ENCODE measurements at regions of chr9 and their contacts with region 1.

Region 1: DNA sequence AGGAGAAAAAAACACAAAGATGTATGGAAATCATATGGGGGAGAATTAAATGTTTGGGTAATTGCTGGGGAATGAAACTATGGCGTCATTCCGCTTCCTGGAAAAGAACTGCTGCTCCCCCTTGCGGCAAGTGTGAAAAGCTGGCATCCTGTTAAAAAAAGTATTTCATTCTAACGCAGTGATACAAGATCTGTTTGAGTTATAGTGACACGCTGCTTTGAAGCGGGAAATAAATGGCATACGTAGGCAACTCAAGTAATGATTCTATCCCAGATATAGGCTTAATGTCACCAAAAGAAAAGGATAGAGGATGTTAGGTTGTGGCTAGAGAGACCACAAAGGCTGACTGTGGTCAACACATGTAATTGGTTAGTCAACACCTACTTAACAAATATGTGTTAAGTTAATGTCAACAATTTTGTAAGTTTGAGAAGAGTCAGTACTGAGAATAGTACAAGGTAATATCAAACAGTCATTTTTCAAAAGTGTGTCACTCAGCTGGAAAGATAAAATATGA is 70.2 kb upstream of the ALDH1A1 start:
- DNase-seq: peak; percentile 32 to 49 (median 35)
- H3K4me3 ChIP-seq: no peak overlapping the region
- H3K4me3 Mint-ChIP-seq: peak overlapping the region in 1 of 8 donors; percentile 12
- H3K27ac ChIP-seq: no peak overlapping the region
- H3K27ac Mint-ChIP-seq: no peak overlapping the region
- H3K4me1 ChIP-seq: peaks cover 4% of the 10 kb centered on the region
- H3K4me1 Mint-ChIP-seq: peaks cover 0 to 10% (median 6%) of the 10 kb centered on the region in 4 donors
- H3K27me3 ChIP-seq: no peaks in the 10 kb centered on the region
- H3K27me3 Mint-ChIP-seq: peaks cover 6 to 11% of the 10 kb centered on the region in 2 donors

Region 2: GRCh38 chr9:71741711-71742648 is 1281.1 kb before region 1 on chr9:
- CTCF ChIA-PET with region 1: no interaction called
- POLR2A ChIA-PET with region 1: no interaction called
- intact Hi-C with region 1: no loop called
- DNase-seq: no peak
- H3K4me3 ChIP-seq: no peak overlapping the region
- H3K4me3 Mint-ChIP-seq: no peak overlapping the region
- H3K27ac ChIP-seq: no peak overlapping the region
- H3K27ac Mint-ChIP-seq: peak overlapping the region in 4 of 7 donors; percentile 6 to 74 (median 28)
- H3K4me1 ChIP-seq: no peaks in the 10 kb centered on the region
- H3K4me1 Mint-ChIP-seq: peaks cover 0 to 17% (median 9%) of the 10 kb centered on the region in 4 donors
- H3K27me3 ChIP-seq: no peaks in the 10 kb centered on the region
- H3K27me3 Mint-ChIP-seq: no peaks in the 10 kb centered on the region

Region 3: DNA sequence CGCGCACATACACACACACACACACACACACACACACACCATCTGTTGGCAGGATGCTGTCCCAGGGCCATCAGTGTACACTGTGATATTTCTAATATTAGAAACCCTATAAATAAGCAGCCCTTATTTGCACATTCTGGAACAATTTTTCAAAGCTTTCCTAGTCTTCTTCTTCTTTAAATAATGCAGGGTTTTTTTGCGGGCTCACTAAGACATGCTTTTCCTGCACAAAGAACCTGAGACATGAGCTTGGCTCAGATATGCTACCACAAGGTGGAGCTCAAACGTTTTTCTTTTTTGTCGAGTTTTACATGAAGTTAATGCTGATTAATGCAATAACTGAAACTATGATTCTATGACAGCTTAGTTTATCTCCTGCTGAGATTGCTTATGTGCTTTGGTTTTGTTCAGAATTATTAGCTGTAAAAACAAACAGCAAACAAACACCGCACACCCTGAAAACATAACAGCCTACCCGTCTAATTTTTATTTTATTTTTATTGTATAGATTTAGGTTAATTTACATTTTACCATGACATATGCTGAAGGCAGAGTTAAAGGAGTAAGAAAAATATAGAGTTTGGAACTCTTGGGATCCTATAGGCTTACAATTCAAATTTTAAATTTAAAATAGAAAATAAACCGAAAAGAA is 166.0 kb before region 1 on chr9:
- CTCF ChIA-PET with region 1: interaction called, 5 read pairs
- POLR2A ChIA-PET with region 1: no interaction called
- intact Hi-C with region 1: loop called (anchors 1 kb)
- DNase-seq: peak in 3 of 5 donors; percentile 7 to 15 (median 8)
- H3K4me3 ChIP-seq: no peak overlapping the region
- H3K4me3 Mint-ChIP-seq: no peak overlapping the region
- H3K27ac ChIP-seq: no peak overlapping the region
- H3K27ac Mint-ChIP-seq: no peak overlapping the region
- H3K4me1 ChIP-seq: no peaks in the 10 kb centered on the region
- H3K4me1 Mint-ChIP-seq: peaks cover 0 to 4% (median 0%) of the 10 kb centered on the region in 4 donors
- H3K27me3 ChIP-seq: no peaks in the 10 kb centered on the region
- H3K27me3 Mint-ChIP-seq: no peaks in the 10 kb centered on the region

Region 4: GRCh38 chr9:73037613-73038012 is 14.5 kb after region 1 on chr9:
- CTCF ChIA-PET with region 1: interaction called, 16 read pairs
- POLR2A ChIA-PET with region 1: no interaction called
- intact Hi-C with region 1: no loop called
- DNase-seq: no peak
- H3K4me3 ChIP-seq: no peak overlapping the region
- H3K4me3 Mint-ChIP-seq: no peak overlapping the region
- H3K27ac ChIP-seq: no peak overlapping the region
- H3K27ac Mint-ChIP-seq: no peak overlapping the region
- H3K4me1 ChIP-seq: no peaks in the 10 kb centered on the region
- H3K4me1 Mint-ChIP-seq: no peaks in the 10 kb centered on the region
- H3K27me3 ChIP-seq: no peaks in the 10 kb centered on the region
- H3K27me3 Mint-ChIP-seq: peaks cover 11 to 14% of the 10 kb centered on the region in 2 donors